Activated CD4-positive, alpha-beta T cell treated with anti-CD3 and anti-CD28 coated beads, Interleukin-2, amount 10 ng/mL, durations not matched to agents 7 days and 5 days (primary cell): ENCODE measurements at regions of chr6 and their contacts with region 1.

Region 1: DNA sequence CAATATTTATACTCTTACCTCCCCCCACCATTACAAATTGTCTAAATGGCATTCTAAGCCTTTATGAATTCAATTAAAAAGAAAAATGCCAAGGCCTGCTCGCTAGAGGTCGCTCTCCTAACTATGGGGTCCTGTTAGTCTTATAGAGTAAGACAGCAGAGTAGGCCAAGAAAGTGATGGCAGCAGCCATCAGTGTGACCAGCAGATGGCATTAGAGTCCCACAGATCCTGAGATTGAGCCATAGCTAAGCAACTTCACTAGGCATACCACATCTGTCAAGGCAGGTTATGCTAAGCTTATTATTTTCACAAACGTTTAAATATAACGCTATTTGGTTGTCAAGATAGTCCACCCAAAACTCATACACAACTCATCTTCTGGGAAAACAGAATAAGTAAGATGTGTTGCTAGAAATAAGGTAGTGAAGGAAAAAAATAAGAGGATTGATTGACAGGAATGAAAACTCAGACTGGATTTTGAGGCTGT is 57.6 kb upstream of the SCAF8 start:
- DNase-seq: peak; percentile 93
- H3K4me3 Mint-ChIP-seq: no peak overlapping the region
- H3K27ac Mint-ChIP-seq: no peak overlapping the region
- H3K4me1 Mint-ChIP-seq: no peaks in the 10 kb centered on the region
- H3K27me3 Mint-ChIP-seq: no peaks in the 10 kb centered on the region

Region 2: GRCh38 chr6:154638369-154638768 is 37.3 kb before region 1 on chr6:
- CTCF ChIA-PET with region 1: no interaction called
- POLR2A ChIA-PET with region 1: no interaction called
- DNase-seq: no peak
- H3K4me3 Mint-ChIP-seq: no peak overlapping the region
- H3K27ac Mint-ChIP-seq: no peak overlapping the region
- H3K4me1 Mint-ChIP-seq: no peaks in the 10 kb centered on the region
- H3K27me3 Mint-ChIP-seq: peaks cover 3% of the 10 kb centered on the region

Region 3: DNA sequence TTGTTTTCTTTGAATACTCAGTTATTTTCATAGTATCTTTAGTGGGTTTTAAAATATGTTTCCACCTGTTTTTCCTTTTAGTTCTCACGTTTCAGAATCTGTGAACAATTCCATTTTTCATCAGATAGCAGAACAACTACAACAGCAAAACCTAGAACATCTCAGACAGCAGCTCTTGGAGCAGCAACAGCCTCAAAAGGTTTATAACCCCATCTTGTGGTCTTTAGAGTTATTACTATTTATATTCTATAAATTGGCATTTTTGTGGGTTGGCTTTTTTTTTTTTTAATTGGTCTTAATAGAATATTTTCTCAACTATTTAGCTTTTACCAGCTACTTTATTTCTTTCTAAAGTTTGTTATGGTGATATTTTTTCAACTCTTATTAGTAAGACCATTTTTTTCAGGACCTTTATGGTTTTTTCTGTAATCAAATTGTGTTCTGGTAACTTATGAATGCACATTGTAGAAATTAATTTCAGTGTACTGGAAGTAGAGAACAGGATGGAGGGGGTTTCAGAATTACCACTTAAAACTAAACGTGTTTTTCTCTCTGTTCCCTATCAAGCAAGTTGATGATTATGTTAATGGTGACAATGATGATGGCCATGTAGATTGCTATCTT is 129.8 kb after region 1 on chr6:
- CTCF ChIA-PET with region 1: interaction called, 14 read pairs
- POLR2A ChIA-PET with region 1: no interaction called
- DNase-seq: no peak
- H3K4me3 Mint-ChIP-seq: no peak overlapping the region
- H3K27ac Mint-ChIP-seq: no peak overlapping the region
- H3K4me1 Mint-ChIP-seq: no peaks in the 10 kb centered on the region
- H3K27me3 Mint-ChIP-seq: no peaks in the 10 kb centered on the region